BJ (cell line): ENCODE measurements at regions of chr18 and their contacts with region 1.

Region 1: DNA sequence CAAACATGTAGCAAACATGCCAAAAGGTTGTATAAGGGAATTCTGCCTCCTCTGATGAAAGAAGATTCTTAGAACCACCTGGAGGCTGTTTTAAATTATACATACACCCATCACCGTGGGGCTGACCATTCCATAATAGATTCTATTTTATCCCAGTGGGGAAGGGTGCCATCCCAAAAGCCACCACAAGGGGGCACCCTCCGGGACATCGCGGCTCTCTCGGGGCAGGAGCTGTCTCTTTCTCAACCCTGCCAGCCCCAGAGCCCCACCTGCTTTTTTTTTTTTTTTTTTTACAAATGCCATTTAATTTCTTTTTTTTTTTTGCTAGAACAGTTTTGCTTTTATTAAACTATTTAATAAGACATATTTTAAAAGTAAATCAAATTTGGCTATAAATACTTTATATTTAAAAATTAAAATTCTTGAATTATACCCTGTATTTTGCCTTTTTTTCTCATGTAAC is 8.6 kb upstream of the MTCL1 start:
- DNase-seq: no peak
- H3K4me3 ChIP-seq: no peak overlapping the region
- H3K27me3 ChIP-seq: no peaks in the 10 kb centered on the region
- CTCF ChIP-seq: peak; percentile 92

Region 2: GRCh38 chr18:7488571-7488970 is 1208.2 kb before region 1 on chr18:
- CTCF ChIA-PET with region 1: no interaction called
- POLR2A ChIA-PET with region 1: no interaction called
- DNase-seq: no peak
- H3K4me3 ChIP-seq: no peak overlapping the region
- H3K27me3 ChIP-seq: no peaks in the 10 kb centered on the region; the same call in 1 of the 2 replicates
- CTCF ChIP-seq: no peak

Region 3: GRCh38 chr18:8162802-8163201 is 534.0 kb before region 1 on chr18:
- CTCF ChIA-PET with region 1: no interaction called
- POLR2A ChIA-PET with region 1: no interaction called
- DNase-seq: no peak
- H3K4me3 ChIP-seq: no peak overlapping the region
- H3K27me3 ChIP-seq: no peaks in the 10 kb centered on the region
- CTCF ChIP-seq: no peak

Region 4: DNA sequence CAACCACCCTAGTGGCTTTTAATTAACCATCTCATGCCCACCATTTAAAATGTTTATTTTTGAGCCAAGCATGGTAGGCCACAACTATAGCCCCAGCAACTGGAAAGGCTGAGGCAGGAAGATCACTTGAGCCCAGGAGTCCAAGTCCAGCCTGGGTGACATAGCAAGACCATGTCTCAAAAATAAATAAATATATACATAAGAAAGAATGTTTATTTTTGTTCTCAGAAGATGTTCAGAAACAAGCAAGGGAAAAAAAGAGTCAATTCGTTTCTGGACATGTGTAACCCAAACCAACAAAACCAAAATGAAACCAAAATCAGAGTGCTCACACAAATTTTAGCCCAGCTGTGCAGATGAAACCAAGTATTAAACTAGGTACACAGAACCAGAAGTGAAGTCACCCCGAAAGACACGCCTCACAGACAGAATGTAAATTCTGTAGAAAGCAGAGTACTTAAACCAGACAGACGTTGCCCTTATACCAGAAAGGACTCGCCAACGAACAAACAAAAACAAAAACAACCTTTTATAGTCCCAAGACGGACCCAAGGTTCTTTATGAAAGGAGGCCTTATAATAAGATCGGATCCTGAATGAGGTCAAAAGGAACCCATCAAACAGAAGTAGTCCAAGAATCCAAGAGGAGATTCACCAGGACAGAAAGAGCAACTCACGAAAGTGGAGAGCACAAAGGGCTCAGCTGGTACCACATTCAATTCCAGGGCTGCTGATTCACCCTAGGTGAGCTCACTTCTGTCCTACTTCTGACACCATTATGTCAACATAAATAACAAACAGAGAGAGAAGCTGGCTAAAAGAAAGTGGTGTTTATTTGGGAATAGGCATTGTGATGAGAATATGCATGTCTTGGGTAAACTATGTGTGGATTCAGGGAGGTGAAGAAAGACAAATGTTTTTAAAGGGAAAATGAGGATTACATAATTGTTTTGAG is 23.2 kb before region 1 on chr18:
- CTCF ChIA-PET with region 1: interaction called, 13 read pairs
- POLR2A ChIA-PET with region 1: no interaction called
- DNase-seq: no peak
- H3K4me3 ChIP-seq: no peak overlapping the region
- H3K27me3 ChIP-seq: no peaks in the 10 kb centered on the region
- CTCF ChIP-seq: no peak

Region 5: DNA sequence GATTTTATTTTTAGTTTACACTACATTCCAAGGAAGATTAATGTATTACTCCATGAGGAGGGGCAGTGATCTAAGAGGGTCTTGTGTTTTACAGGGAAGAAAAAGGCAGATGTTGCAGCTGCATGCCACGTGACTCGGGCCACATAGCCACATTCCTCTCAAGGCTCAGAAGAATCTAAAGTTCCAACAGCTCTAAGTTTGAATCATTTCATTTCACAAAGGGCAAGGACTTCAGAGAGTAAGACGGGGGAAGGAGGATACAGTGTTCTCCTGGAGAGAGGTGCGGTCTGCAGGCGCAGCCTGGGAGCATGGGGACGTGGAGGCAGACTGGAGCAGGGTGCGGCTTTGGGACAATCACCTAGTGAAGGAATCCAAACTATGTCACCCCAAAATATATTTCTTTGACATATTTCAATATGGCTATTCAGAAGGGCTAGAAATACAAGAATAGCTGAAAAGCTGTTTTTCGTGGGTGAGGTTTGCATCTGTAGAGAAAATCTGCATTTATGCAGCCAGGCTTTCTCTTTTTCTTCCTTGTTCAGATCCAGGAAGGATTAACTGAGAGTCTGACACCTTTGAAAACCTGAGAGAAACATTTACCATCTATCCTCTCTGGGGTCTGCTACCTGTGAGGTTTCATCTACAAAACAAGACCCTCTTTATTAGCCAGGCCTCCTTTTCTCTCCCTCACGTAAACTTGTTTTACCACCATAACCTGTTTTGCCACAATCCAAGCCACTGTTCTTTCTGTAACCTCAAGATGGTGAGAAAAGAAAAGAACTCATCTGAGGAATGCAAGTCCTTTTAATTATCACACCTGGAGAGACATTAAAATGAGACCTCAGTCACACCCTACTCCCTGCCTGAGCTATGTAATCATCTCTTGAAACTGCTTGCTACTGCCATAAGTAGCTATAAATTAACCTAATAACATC is 240.6 kb after region 1 on chr18:
- CTCF ChIA-PET with region 1: no interaction called
- POLR2A ChIA-PET with region 1: interaction called, 10 read pairs
- DNase-seq: no peak
- H3K4me3 ChIP-seq: no peak overlapping the region
- H3K27me3 ChIP-seq: no peaks in the 10 kb centered on the region
- CTCF ChIP-seq: no peak